Posterior cingulate gyrus (tissue), 11 donors: ENCODE measurements at regions of chr10 and their contacts with region 1.

Region 1: DNA sequence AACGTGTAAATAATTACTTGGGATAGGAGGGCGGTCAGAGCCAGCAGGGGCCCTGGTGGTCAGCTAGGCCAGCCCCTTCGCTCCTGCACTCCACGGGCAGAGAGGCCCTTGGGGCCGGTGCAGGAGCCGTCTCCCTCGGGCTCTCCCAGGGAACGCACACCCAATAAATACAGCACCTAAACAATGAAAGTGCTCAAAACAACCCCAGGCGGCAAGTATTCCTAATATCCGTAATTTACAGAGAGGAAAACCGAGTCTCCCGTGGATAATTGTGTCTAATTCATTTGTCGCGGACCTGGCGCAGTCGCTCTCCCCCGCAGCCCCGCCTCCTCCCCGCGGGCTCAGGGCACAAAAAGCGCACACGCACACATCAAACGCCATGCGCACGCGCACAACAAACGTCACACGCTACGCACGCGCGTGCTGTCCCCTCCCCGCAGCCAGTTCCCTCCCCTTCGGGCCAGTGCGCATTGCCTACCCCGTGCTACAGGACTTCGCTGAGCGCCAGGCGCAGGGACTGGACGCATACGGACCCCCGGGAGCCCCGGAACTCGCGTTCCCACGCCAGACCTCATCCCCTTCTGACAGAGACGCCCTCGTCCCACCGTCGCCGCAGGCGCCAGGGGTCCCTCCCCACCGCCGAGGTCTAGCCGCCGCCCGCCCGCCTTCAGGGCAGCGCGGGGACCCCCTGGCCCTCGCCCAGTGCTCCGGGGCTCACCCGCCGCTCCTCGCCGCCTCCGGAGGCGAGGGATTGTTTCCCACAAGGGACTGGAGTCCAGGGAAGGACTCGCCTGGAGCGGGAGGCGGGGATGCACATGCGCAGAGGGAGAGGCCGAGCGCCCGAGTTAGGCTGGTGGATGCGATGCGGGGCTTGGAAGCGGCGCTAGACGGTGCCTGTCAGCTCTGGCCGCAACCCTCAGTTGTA is at the start of gene ZNF248:
- DNase-seq: peak; percentile 91 to 99 (median 95)

Region 2: DNA sequence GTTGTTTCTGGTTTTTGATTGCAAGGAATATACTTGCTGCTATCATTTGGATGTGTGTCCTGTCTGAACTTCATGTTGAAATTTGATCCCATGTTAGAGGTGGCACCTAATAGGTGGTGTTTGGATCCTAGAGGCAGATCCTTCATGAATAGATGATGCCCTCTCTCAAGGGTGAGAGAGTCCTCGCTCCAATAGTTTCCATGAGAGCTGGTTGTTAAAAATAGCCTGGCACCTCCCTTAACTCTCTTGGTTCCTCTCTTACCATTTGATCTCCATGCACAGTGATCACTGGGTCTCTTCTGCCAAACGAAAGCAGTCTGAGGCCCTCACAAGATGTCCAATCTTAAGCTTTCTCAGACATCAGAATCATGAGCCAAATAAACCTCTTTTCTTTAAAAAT is 48.8 kb after region 1 on chr10:
- intact Hi-C with region 1: no loop called
- DNase-seq: no peak

Region 3: GRCh38 chr10:38010119-38010903 is 152.8 kb after region 1 on chr10 and contains the start of gene ZNF33A:
- intact Hi-C with region 1: loop called (anchors 2 kb)
- DNase-seq: peak; percentile 80 to 98 (median 92)

Region 4: DNA sequence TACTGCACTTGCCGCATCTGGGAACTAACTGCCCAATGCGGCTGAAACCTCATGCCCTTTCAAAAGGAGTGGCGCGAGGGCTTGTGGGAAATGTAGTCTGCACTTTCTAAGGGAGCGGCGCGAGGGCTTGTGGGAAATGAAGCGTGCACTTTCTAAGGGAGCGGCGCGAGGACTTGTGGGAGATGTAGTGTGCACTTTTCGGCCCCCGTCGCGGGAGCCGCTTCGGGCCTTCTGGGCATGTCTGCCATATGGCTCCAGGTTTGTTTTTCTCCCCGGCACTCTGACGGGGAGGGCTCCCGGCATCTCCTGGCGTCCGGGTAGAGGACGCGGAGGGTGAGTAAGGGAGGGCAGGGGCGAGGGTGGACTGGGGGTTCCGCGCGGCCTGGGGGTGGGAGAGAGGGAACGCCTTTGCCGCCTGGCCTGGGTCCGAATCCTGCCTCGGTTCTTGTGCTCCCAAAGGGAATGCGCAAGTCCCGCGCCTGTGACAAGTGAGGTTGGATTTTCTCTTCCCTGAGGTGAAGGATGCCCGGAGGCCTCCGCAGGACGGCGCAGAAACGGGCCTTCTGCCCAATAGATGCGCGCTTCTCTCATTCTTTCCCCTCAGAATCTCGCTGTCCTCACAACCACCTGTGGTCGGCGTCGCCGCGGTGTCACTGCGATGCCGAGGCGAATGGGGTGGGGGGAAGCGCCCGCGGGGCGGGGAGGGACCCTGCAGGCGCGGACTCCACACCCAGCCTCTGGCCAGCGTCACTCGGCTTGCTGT is 236.8 kb after region 1 on chr10 and contains the start of gene ZNF37A:
- intact Hi-C with region 1: loop called (anchors 2 kb)
- DNase-seq: peak; percentile 89 to 99 (median 96)